T-cell (primary cell): ENCODE measurements at regions of chr3 and their contacts with region 1.

Region 1: GRCh38 chr3:37974121-37975083 is 16.2 kb upstream of the VILL start:
- DNase-seq: peak; percentile 30 to 84 (median 59)
- ATAC-seq: peak; percentile 89 to 99 (median 93)
- H3K4me3 ChIP-seq: no peak overlapping the region
- H3K4me3 Mint-ChIP-seq: no peak overlapping the region
- H3K27ac ChIP-seq: no peak overlapping the region
- H3K27ac Mint-ChIP-seq: no peak overlapping the region
- H3K4me1 ChIP-seq: peaks cover 0 to 8% of the 10 kb centered on the region in 2 experiments
- H3K4me1 Mint-ChIP-seq: peaks cover 3 to 8% (median 3%) of the 10 kb centered on the region in 3 donors
- H3K27me3 ChIP-seq: no peaks in the 10 kb centered on the region
- H3K27me3 Mint-ChIP-seq: no peaks in the 10 kb centered on the region

Region 2: DNA sequence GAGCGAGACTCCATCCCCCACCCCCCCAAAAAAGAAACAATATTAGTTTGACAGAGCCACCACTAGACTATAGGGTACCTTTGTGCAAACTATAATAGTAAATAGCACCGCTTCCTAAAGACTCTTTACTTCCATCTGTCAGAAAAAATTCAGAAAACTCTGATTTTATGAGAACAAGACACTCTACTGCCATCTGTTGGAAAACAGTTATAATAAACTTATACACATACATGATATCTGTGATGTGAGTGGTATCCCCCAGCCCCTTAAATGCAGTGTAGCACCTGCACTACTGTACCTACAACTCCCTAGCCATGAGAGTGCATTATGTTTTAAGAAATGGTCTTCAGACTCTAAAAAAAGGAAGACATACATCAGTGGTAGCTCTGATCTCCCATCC is 159.9 kb before region 1 on chr3:
- CTCF ChIA-PET with region 1: no interaction called
- POLR2A ChIA-PET with region 1: no interaction called
- DNase-seq: no peak
- ATAC-seq: no peak
- H3K4me3 ChIP-seq: no peak overlapping the region
- H3K4me3 Mint-ChIP-seq: no peak overlapping the region
- H3K27ac ChIP-seq: no peak overlapping the region
- H3K27ac Mint-ChIP-seq: no peak overlapping the region
- H3K4me1 ChIP-seq: no peaks in the 10 kb centered on the region
- H3K4me1 Mint-ChIP-seq: no peaks in the 10 kb centered on the region
- H3K27me3 ChIP-seq: no peaks in the 10 kb centered on the region
- H3K27me3 Mint-ChIP-seq: peaks cover 0 to 12% of the 10 kb centered on the region in 2 donors

Region 3: GRCh38 chr3:38004415-38005076 is 30.1 kb after region 1 on chr3:
- CTCF ChIA-PET with region 1: interaction called, 5 to 14 read pairs
- POLR2A ChIA-PET with region 1: no interaction called
- DNase-seq: peak in 25 of 35 experiments; percentile 26 to 64 (median 41)
- ATAC-seq: peak; percentile 53 to 70 (median 60)
- H3K4me3 ChIP-seq: no peak overlapping the region
- H3K4me3 Mint-ChIP-seq: no peak overlapping the region
- H3K27ac ChIP-seq: no peak overlapping the region
- H3K27ac Mint-ChIP-seq: peak overlapping the region; percentile 74 to 81
- H3K4me1 ChIP-seq: peaks cover 0 to 18% of the 10 kb centered on the region in 2 experiments
- H3K4me1 Mint-ChIP-seq: peaks cover 19 to 22% (median 19%) of the 10 kb centered on the region in 3 donors
- H3K27me3 ChIP-seq: no peaks in the 10 kb centered on the region
- H3K27me3 Mint-ChIP-seq: no peaks in the 10 kb centered on the region

Region 4: DNA sequence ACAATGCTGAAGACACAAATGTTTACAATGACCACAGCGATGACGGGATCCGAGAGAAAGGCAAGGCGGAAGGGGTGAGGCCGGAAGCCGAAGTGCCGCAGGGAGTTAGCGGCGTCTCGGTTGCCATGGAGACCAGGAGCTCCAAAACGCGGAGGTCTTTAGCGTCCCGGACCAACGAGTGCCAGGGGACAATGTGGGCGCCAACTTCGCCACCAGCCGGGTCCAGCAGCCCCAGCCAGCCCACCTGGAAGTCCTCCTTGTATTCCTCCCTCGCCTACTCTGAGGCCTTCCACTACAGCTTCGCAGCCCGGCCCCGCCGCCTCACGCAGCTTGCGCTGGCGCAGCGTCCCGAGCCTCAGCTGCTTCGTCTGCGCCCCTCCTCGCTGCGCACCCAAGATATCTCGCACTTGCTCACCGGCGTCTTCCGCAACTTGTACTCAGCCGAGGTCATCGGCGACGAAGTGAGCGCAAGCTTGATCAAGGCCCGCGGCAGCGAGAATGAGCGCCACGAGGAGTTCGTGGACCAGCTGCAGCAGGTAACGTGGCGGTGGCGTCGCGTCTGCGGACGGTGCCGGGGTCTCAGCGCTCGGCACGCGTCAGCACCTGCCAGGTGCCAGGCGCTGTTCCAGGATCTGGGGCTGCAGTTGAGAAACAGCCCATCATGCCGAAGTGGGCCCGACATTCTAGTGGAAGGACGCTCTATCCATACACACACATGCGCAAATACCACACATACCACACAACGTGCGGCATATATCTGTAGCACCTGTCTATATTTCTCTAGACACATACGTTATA is 64.9 kb after region 1 on chr3 and contains the start of gene DLEC1:
- CTCF ChIA-PET with region 1: interaction called, 3 to 11 read pairs
- POLR2A ChIA-PET with region 1: interaction called in 1 of 2 experiments, 3 read pairs
- DNase-seq: peak; percentile 56 to 92 (median 81)
- ATAC-seq: peak; percentile 72 to 78 (median 76)
- H3K4me3 ChIP-seq: peak within 1 kb of the TSS; percentile 66 to 68
- H3K4me3 Mint-ChIP-seq: peak within 1 kb of the TSS; percentile 82 to 91 (median 84)
- H3K27ac ChIP-seq: peak within 1 kb of the TSS; percentile 97
- H3K27ac Mint-ChIP-seq: peak within 1 kb of the TSS; percentile 91 to 97
- H3K4me1 ChIP-seq: peaks cover 8 to 38% of the 10 kb centered on the region in 2 experiments
- H3K4me1 Mint-ChIP-seq: peaks cover 30 to 42% (median 34%) of the 10 kb centered on the region in 3 donors
- H3K27me3 ChIP-seq: no peaks in the 10 kb centered on the region
- H3K27me3 Mint-ChIP-seq: no peaks in the 10 kb centered on the region
- total RNA-seq, gene DLEC1: 4.7 to 21.7 (median 17.8) TPM